Activated T-helper 1 cell treated with anti-CD3 and anti-CD28 coated beads, Interleukin-12 subunit alpha, Interleukin-12 subunit beta, Interleukin-2, Interleukin-4 antibody, amounts not matched to agents 30 ng/mL and 10 ng/mL and 1 ng/mL, durations not matched to agents 14 hours and 24 hours and 36 hours (primary cell): ENCODE measurements at regions of chr16 and their contacts with region 1.

Region 1: GRCh38 chr16:58733671-58734458 is at the start of gene GOT2:
- DNase-seq: peak; percentile 78
- H3K4me3 Mint-ChIP-seq: peak within 1 kb of the TSS; percentile 100
- H3K27ac Mint-ChIP-seq: peak within 1 kb of the TSS; percentile 99
- H3K4me1 Mint-ChIP-seq: peaks cover 27% of the 10 kb centered on the region
- H3K27me3 Mint-ChIP-seq: no peaks in the 10 kb centered on the region
- total RNA-seq, gene GOT2: 135 and 137 TPM in 2 replicates

Region 2: DNA sequence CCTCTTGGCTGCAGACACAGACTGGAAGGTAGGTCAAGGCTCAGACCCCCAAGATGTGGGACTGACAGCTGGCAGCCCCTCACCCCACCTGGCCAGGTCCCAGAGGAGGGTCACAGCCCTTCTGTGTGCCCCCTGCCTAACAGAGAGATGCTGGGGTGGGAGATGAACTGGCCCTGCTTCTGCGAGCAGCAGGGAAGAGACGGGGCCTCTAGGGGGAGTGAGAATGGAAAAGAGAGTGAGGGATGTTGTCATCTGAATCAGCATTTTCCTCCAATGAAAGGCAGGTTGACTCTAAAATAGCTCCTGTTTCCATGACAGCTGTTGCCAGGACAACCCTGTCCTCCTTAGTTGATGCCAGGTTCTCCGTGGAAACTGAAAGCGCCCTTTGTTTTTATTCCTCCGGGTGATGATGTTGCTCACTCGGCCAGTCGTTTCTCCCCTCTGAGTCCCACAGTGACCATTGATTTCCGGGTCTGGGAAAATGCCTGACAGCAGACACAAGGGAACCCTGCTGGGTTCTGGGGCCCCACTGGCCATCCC is 238.8 kb before region 1 on chr16:
- intact Hi-C with region 1: loop called (anchors 1 kb)
- DNase-seq: peak; percentile 65
- H3K4me3 Mint-ChIP-seq: no peak overlapping the region
- H3K27ac Mint-ChIP-seq: peak overlapping the region; percentile 87
- H3K4me1 Mint-ChIP-seq: peaks cover 9% of the 10 kb centered on the region
- H3K27me3 Mint-ChIP-seq: peaks cover 1% of the 10 kb centered on the region

Region 3: DNA sequence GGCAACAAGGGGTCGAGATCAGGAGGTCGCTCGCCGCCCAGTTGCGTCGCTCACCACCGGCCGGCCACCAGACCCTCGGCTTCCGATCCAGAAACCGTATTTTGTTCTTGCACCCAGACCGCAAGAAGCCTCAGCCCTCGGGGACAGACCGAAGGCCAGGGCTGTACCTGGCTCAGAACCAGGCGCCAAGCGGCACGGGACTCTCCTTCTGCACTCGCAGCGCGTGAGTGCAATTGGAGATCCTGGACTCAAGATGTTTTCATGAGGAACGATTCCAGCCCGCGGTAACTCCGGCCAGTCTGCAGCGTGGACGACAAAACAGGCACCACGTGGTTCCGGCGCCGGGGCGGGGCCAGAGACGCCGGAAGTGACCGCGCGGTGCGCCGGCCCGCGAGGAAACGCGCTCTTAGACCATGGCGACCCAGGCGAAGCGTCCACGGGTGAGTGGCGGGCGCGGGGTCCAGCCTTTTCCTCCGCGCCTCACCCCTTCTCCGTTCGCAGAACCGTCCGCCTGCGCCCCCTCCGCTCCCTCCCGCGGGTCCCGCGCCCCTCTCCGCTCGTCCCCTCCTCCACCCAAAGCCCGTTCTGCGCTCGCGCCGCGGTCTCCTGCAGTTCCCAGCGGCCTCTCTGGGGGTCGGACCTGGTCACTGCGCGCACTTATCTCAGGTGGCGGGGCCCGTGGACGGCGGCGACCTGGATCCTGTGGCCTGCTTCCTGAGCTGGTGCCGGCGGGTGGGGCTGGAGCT is 218.6 kb before region 1 on chr16 and contains the start of gene SETD6:
- intact Hi-C with region 1: loop called (anchors 1 kb)
- DNase-seq: peak; percentile 77
- H3K4me3 Mint-ChIP-seq: peak within 1 kb of the TSS; percentile 92
- H3K27ac Mint-ChIP-seq: peak within 1 kb of the TSS; percentile 83
- H3K4me1 Mint-ChIP-seq: peaks cover 36% of the 10 kb centered on the region
- H3K27me3 Mint-ChIP-seq: no peaks in the 10 kb centered on the region
- total RNA-seq, gene SETD6: 32.1 and 34.9 TPM in 2 replicates

Region 4: GRCh38 chr16:58684354-58685083 is 49.3 kb before region 1 on chr16 and contains the start of gene SLC38A7:
- intact Hi-C with region 1: loop called (anchors 1 kb)
- DNase-seq: peak; percentile 72
- H3K4me3 Mint-ChIP-seq: peak within 1 kb of the TSS; percentile 90
- H3K27ac Mint-ChIP-seq: peak within 1 kb of the TSS; percentile 77
- H3K4me1 Mint-ChIP-seq: peaks cover 14% of the 10 kb centered on the region
- H3K27me3 Mint-ChIP-seq: peaks cover 7% of the 10 kb centered on the region
- total RNA-seq, gene SLC38A7: 9.3 and 11.8 TPM in 2 replicates